ENCODE measurements at regions of chr12 and their contacts with region 1.

Region 1: GRCh38 chr12:49413010-49413409 is 45.7 kb downstream of the SPATS2 start:
- DNase-seq: no peak
- ATAC-seq: no peak
- H3K4me3 ChIP-seq: no peak overlapping the region
- H3K4me3 Mint-ChIP-seq: no peak overlapping the region
- H3K27ac ChIP-seq: no peak overlapping the region
- H3K27ac Mint-ChIP-seq: no peak overlapping the region
- H3K4me1 ChIP-seq: peaks cover 0 to 2% of the 10 kb centered on the region in 2 experiments
- H3K4me1 Mint-ChIP-seq: no peaks in the 10 kb centered on the region
- H3K27me3 ChIP-seq: no peaks in the 10 kb centered on the region
- H3K27me3 Mint-ChIP-seq: no peaks in the 10 kb centered on the region

Region 2: GRCh38 chr12:49442915-49443314 is 29.9 kb after region 1 on chr12:
- CTCF ChIA-PET with region 1: no interaction called
- POLR2A ChIA-PET with region 1: interaction called in 1 of 2 experiments, 11 read pairs
- DNase-seq: no peak
- ATAC-seq: no peak
- H3K4me3 ChIP-seq: no peak overlapping the region
- H3K4me3 Mint-ChIP-seq: no peak overlapping the region
- H3K27ac ChIP-seq: no peak overlapping the region
- H3K27ac Mint-ChIP-seq: no peak overlapping the region
- H3K4me1 ChIP-seq: no peaks in the 10 kb centered on the region
- H3K4me1 Mint-ChIP-seq: peaks cover 0 to 8% (median 0%) of the 10 kb centered on the region in 3 donors
- H3K27me3 ChIP-seq: no peaks in the 10 kb centered on the region
- H3K27me3 Mint-ChIP-seq: no peaks in the 10 kb centered on the region

Region 3: DNA sequence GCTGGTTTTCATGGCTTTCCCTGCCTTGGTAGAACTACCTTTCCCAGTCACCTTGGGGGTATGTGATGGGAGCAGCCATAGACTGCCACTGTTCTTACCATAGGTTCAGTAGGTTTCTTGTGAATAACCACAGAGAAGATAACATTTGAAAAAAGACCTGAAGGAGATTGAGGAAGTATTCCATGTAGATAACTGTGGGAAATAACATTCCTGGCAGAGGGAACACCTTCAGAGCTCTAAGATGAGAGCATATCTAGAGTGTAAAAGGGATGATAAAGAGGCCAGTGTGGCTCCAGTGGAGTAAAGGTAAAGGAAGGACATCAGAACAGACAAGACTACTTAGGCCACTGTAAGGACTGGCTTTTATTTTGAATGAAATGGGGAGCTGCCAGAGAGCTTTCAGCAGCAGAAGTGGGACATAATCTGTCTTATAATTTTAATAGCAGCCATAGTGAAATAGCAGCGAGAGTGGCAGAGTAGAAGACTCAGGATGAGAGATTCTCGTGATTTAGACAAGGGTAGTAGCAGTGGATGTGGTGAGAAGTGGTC is 43.2 kb after region 1 on chr12:
- CTCF ChIA-PET with region 1: no interaction called
- POLR2A ChIA-PET with region 1: interaction called in 1 of 2 experiments, 12 read pairs
- DNase-seq: no peak
- ATAC-seq: no peak
- H3K4me3 ChIP-seq: no peak overlapping the region
- H3K4me3 Mint-ChIP-seq: no peak overlapping the region
- H3K27ac ChIP-seq: no peak overlapping the region
- H3K27ac Mint-ChIP-seq: no peak overlapping the region
- H3K4me1 ChIP-seq: no peaks in the 10 kb centered on the region
- H3K4me1 Mint-ChIP-seq: peaks cover 3 to 11% (median 5%) of the 10 kb centered on the region in 3 donors
- H3K27me3 ChIP-seq: no peaks in the 10 kb centered on the region
- H3K27me3 Mint-ChIP-seq: no peaks in the 10 kb centered on the region

Region 4: DNA sequence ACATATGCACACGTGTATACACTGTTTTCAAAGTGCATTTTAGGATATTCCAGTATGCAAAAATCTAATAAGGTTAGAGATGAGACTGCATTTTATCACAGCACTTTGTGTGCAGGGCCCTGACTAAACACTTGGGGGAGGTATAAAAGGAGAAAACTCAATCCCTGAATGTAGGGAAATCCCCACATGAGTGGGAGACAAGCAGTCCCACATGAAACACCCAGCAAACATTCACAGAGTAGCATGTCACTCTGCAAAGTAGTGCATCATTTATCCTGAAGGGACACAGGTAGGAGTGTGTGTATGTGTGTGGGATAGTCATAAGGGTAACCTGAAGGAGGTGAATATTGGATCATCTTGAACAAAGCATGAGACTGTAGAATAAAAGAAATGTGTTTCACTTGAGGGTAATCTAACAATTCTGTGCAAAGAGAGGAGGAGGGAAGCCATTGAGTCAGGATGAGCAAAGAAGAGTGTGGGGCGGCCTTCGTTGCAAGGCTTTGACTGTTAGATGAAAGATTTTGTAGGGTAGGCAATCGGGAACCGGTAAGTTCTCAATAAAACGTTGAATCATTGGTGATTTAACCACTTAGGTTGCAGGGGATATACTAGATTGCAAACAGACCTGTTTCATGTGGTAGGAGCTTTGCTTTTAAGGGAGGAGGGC is 213.3 kb after region 1 on chr12:
- CTCF ChIA-PET with region 1: no interaction called
- POLR2A ChIA-PET with region 1: no interaction called
- DNase-seq: peak in 1 of 35 experiments; percentile 62
- ATAC-seq: peak in 1 of 4 experiments; percentile 17
- H3K4me3 ChIP-seq: no peak overlapping the region
- H3K4me3 Mint-ChIP-seq: no peak overlapping the region
- H3K27ac ChIP-seq: no peak overlapping the region
- H3K27ac Mint-ChIP-seq: no peak overlapping the region
- H3K4me1 ChIP-seq: peaks cover 17 to 26% of the 10 kb centered on the region in 2 experiments
- H3K4me1 Mint-ChIP-seq: peaks cover 15 to 24% (median 22%) of the 10 kb centered on the region in 3 donors
- H3K27me3 ChIP-seq: no peaks in the 10 kb centered on the region
- H3K27me3 Mint-ChIP-seq: no peaks in the 10 kb centered on the region